Right ventricle myocardium superior (tissue), 1 donor: ENCODE measurements at regions of chr17 and their contacts with region 1.

Region 1: GRCh38 chr17:46212634-46213435 is 19.6 kb upstream of the KANSL1 start:
- DNase-seq: no peak
- ATAC-seq: peak; percentile 89

Region 2: DNA sequence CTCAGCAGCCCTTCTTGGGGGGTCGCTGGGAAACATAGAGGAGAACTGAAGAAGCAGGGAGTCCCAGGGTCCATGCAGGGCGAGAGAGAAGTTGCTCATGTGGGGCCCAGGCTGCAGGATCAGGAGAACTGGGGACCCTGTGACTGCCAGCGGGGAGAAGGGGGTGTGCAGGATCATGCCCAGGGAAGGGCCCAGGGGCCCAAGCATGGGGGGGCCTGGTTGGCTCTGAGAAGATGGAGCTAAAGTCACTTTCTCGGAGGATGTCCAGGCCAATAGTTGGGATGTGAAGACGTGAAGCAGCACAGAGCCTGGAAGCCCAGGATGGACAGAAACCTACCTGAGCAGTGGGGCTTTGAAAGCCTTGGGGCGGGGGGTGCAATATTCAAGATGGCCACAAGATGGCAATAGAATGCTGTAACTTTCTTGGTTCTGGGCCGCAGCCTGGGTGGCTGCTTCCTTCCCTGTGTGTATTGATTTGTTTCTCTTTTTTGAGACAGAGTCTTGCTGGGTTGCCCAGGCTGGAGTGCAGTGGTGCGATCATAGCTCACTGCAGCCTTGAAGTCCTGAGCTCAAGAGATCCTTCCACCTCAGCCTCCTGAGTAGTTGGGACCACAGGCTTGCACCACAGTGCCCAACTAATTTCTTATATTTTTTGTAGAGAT is 210.4 kb before region 1 on chr17:
- intact Hi-C with region 1: loop called (anchors 5 kb)
- DNase-seq: peak; percentile 72
- ATAC-seq: peak; percentile 91

Region 3: DNA sequence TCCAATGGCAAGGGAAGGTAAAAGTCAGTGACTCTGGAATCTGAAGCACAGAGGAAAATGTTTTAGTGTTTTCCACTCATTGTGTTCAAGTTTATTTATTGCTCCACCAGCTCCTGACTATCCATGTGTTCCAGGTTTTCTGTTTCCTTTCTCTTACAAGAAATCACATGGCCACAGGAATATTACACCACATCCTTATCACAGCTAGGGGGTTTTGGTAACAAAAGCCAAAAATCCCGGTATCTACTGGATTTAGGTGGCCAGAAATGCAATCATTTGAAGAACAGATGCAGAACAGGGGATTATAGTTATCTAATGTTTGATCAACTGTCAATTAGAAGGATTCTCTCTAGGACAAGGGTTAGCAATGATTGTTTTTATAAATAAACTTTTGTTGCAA is 165.9 kb before region 1 on chr17:
- intact Hi-C with region 1: loop called (anchors 5 kb)
- DNase-seq: no peak
- ATAC-seq: no peak

Region 4: GRCh38 chr17:46266656-46267544 is 54.1 kb after region 1 on chr17:
- intact Hi-C with region 1: no loop called
- DNase-seq: peak; percentile 93
- ATAC-seq: peak; percentile 96